PC-9 (cell line): ENCODE measurements at regions of chr9 and their contacts with region 1.

Region 1: GRCh38 chr9:69971643-69972449 is 71.8 kb upstream of the MAMDC2 start:
- DNase-seq: peak in 1 of 2 experiments; percentile 73
- H3K4me3 ChIP-seq: no peak overlapping the region
- H3K27ac ChIP-seq: no peak overlapping the region
- H3K4me1 ChIP-seq: no peaks in the 10 kb centered on the region
- H3K27me3 ChIP-seq: no peaks in the 10 kb centered on the region
- CTCF ChIP-seq: peak; percentile 91

Region 2: GRCh38 chr9:69376651-69377050 is 595.2 kb before region 1 on chr9:
- CTCF ChIA-PET with region 1: no interaction called
- POLR2A ChIA-PET with region 1: no interaction called
- intact Hi-C with region 1: no loop called
- DNase-seq: peak; percentile 47 to 60
- H3K4me3 ChIP-seq: no peak overlapping the region
- H3K27ac ChIP-seq: no peak overlapping the region
- H3K4me1 ChIP-seq: peaks cover 32% of the 10 kb centered on the region
- H3K27me3 ChIP-seq: no peaks in the 10 kb centered on the region
- CTCF ChIP-seq: no peak

Region 3: GRCh38 chr9:69925452-69925851 is 46.4 kb before region 1 on chr9:
- CTCF ChIA-PET with region 1: interaction called, 12 read pairs
- POLR2A ChIA-PET with region 1: no interaction called
- intact Hi-C with region 1: no loop called
- DNase-seq: no peak
- H3K4me3 ChIP-seq: no peak overlapping the region
- H3K27ac ChIP-seq: no peak overlapping the region
- H3K4me1 ChIP-seq: no peaks in the 10 kb centered on the region
- H3K27me3 ChIP-seq: no peaks in the 10 kb centered on the region
- CTCF ChIP-seq: no peak

Region 4: GRCh38 chr9:70013598-70014196 is 41.9 kb after region 1 on chr9:
- CTCF ChIA-PET with region 1: interaction called, 13 read pairs
- POLR2A ChIA-PET with region 1: no interaction called
- intact Hi-C with region 1: no loop called
- DNase-seq: peak in 1 of 2 experiments; percentile 65
- H3K4me3 ChIP-seq: no peak overlapping the region
- H3K27ac ChIP-seq: peak overlapping the region; percentile 33; the same call in 1 of the 2 replicates
- H3K4me1 ChIP-seq: peaks cover 23% of the 10 kb centered on the region
- H3K27me3 ChIP-seq: no peaks in the 10 kb centered on the region
- CTCF ChIP-seq: no peak

Region 5: DNA sequence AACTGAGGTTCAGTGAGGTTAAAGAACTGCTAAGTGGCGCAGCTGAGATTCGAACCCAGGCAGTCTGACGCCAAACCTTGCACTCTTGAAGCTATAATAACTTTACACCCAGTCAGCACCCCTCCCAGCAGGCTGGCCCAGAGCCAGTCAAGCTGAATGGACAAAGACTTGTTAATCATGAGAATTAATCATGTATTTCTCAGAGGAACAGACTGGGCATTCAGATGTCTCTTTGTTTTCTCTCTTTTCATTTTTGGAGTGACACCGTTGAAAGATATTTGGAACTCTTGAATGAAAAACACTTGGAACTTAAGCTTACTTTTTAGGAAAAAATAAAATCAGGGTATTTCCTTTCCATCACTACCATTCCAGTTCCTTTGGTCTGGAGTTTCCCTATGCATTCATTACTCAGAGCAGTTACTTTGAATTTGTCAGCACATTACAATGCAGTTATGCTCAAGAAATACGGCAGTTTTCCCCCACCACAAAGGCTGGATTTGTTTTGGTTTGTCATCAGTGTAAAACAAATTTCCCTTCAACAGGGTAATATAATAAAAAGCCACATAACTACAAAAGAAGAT is 49.2 kb after region 1 on chr9:
- CTCF ChIA-PET with region 1: interaction called, 4 read pairs
- POLR2A ChIA-PET with region 1: no interaction called
- intact Hi-C with region 1: loop called (anchors 5 kb)
- DNase-seq: peak; percentile 51 to 62
- H3K4me3 ChIP-seq: no peak overlapping the region
- H3K27ac ChIP-seq: 0 out of 2 replicates have a peak overlapping the region, but pooled peaks have one; percentile 19
- H3K4me1 ChIP-seq: peaks cover 21% of the 10 kb centered on the region
- H3K27me3 ChIP-seq: no peaks in the 10 kb centered on the region
- CTCF ChIP-seq: no peak

Region 6: DNA sequence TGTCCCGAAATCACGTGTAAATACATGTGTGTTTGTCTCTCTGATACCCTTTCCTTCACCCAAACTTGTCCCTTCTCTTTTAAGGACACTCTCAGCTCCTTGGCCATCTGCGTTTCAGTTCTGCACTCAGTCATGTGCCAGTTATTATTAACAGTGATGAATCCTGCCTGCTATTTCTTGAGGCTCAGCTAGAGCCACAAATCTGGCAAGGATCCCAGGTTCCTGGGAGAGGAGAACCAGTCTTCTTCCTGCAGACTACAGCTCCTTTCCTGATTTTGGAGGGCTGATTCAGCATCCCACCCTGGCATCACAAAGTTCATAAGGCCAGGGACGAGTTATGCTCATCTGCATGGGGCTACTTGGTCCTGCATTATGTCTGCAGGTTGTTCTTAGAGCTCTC is 77.4 kb after region 1 on chr9:
- CTCF ChIA-PET with region 1: no interaction called
- POLR2A ChIA-PET with region 1: no interaction called
- intact Hi-C with region 1: loop called (anchors 2 kb)
- DNase-seq: peak; percentile 50 to 62
- H3K4me3 ChIP-seq: no peak overlapping the region
- H3K27ac ChIP-seq: no peak overlapping the region
- H3K4me1 ChIP-seq: peaks cover 35% of the 10 kb centered on the region
- H3K27me3 ChIP-seq: no peaks in the 10 kb centered on the region
- CTCF ChIP-seq: no peak

Region 7: GRCh38 chr9:70054521-70054920 is 82.7 kb after region 1 on chr9:
- CTCF ChIA-PET with region 1: no interaction called
- POLR2A ChIA-PET with region 1: interaction called, 10 read pairs
- intact Hi-C with region 1: loop called (anchors 2 kb)
- DNase-seq: peak in 1 of 2 experiments; percentile 71
- H3K4me3 ChIP-seq: peak overlapping the region; percentile 17; the same call in 1 of the 2 replicates
- H3K27ac ChIP-seq: peak overlapping the region; percentile 76
- H3K4me1 ChIP-seq: peaks cover 44% of the 10 kb centered on the region
- H3K27me3 ChIP-seq: no peaks in the 10 kb centered on the region
- CTCF ChIP-seq: no peak

Region 8: GRCh38 chr9:70602321-70603019 is 630.6 kb after region 1 on chr9:
- CTCF ChIA-PET with region 1: interaction called, 6 read pairs
- POLR2A ChIA-PET with region 1: no interaction called
- intact Hi-C with region 1: loop called (anchors 1 kb)
- DNase-seq: peak; percentile 56 to 57
- H3K4me3 ChIP-seq: no peak overlapping the region
- H3K27ac ChIP-seq: no peak overlapping the region
- H3K4me1 ChIP-seq: no peaks in the 10 kb centered on the region
- H3K27me3 ChIP-seq: no peaks in the 10 kb centered on the region
- CTCF ChIP-seq: peak; percentile 87